ENCODE measurements at regions of chr5 and their contacts with region 1.

Region 1: DNA sequence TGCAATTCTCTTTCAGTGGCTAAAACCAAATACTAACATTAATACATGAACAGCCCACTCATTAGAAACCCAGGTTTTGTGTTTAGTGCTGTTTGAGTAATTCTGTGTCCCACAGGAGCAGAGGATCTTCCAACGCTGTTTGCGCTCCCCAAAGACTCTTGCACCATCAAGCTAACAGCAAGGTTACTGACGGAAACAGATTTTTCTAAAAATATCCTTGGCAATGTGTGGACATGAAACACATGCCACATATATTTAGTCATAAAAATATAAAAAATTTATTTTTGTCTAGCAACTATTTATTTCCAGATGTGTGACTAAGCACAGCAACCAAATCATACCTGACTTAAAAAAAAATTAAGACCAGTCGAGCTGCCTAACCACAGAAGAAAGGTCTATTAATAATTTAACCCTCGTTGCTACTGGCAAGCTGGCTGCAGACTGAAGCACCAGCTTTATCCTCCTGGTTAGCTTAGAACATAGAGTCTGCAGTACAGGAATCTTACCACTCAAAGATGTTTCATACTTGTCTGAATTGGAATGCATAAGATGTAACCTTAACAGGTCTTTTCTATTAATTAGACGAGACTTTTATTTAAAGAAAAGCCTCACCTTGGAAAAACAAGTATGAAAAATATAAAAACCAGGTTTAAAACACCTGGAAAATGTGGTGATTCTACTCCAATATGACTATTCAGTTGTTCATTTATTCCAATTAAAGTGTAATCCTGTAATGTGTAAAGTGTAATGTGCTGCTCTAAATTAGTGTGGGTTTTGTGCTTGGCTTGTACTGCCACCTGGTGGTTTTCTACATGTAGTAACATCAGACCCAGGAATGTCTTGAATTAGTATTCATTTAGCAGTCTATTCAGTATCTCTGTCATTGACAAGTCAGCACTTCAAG is 272.5 kb downstream of the EPB41L4A start:
- DNase-seq: peak; percentile 38 to 62
- ATAC-seq: peak; percentile 89 to 90
- H3K4me3 ChIP-seq: no peak overlapping the region
- H3K27ac ChIP-seq: peak overlapping the region; percentile 45 to 80 (median 74)
- H3K4me1 ChIP-seq: peaks cover 17 to 20% of the 10 kb centered on the region in 2 donors
- H3K27me3 ChIP-seq: no peaks in the 10 kb centered on the region
- CTCF ChIP-seq: peak; percentile 82 to 90 (median 87)
- POLR2A ChIP-seq: no peak

Region 2: GRCh38 chr5:111158105-111158744 is 988.4 kb before region 1 on chr5:
- in situ Hi-C with region 1: loop called (anchors 25 kb)
- intact Hi-C with region 1: no loop called
- DNase-seq: peak; percentile 5 to 16
- ATAC-seq: no peak
- H3K4me3 ChIP-seq: no peak overlapping the region
- H3K27ac ChIP-seq: no peak overlapping the region
- H3K4me1 ChIP-seq: no peaks in the 10 kb centered on the region
- H3K27me3 ChIP-seq: no peaks in the 10 kb centered on the region
- CTCF ChIP-seq: peak; percentile 72 to 93 (median 78)
- POLR2A ChIP-seq: no peak

Region 3: DNA sequence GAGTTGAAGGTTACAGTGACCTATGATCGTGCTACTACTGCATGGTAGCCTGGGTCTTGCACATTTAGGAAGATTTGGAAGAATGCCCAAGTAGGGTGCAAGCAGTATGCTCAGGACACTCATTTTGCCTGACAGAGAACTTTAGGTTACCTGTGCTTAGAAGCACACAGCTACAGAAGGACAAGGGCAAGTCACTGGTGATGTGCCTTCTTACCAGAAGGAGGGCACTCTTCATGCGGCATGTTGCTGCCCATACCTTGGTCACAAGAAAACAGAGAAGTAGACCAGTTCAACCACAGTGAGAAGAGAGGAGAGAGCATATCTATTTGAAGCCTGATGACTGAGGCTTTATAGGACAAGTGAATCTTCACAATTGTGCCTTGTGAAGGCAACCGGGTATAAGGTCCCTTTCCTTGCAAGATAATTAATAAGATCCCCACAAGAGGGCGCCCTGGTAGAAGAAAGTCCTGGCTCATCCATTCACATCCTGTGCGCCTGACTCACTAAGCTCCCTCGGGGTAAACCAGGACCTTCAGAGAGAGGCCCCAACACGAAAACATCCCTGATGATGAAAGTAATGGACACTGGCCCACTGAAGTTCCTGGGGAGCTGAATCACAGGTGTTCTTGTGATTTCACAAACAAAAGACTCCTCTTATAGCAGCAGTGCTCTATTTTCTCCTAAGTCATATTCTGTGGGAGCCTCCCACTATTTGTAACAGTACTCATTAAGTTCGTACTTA is 596.1 kb before region 1 on chr5:
- in situ Hi-C with region 1: loop called (anchors 5 to 10 kb)
- intact Hi-C with region 1: loop called (anchors 1 kb)
- DNase-seq: peak; percentile 77 to 84
- ATAC-seq: peak; percentile 99
- H3K4me3 ChIP-seq: peak overlapping the region in 1 of 4 donors; percentile 3
- H3K27ac ChIP-seq: peak overlapping the region; percentile 56 to 73 (median 66)
- H3K4me1 ChIP-seq: peaks cover 4 to 5% of the 10 kb centered on the region in 2 donors
- H3K27me3 ChIP-seq: no peaks in the 10 kb centered on the region
- CTCF ChIP-seq: peak; percentile 59 to 80 (median 74)
- POLR2A ChIP-seq: no peak

Region 4: DNA sequence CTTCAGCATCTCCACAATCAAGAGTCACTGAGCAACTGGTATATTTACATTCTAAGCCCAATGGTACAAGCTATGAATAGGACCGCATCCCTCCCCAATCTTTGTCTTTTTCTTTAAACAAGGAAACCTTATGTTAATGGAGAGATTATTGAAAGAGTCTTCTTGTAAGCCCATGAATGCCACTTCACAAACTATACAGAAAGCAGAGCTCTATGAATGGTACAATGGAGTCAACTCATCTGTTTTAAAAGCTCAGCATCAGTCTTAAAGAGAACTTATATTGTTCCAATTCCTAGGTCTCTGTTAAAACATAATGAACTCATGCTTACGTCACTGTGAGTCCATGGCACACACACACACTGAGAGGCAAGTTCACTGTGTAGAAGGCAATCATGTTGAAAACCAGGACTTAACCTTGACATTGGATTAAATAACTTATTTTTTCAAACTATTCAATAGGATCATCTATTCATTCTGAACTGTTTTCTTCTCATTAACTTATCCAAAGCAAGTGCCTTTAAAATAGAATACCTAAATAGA is 394.1 kb before region 1 on chr5:
- in situ Hi-C with region 1: loop called in 3 of 4 experiments (anchors 5 to 10 kb)
- intact Hi-C with region 1: loop called (anchors 2 kb)
- DNase-seq: no peak
- ATAC-seq: no peak
- H3K4me3 ChIP-seq: no peak overlapping the region
- H3K27ac ChIP-seq: no peak overlapping the region
- H3K4me1 ChIP-seq: peaks cover 73 to 83% of the 10 kb centered on the region in 2 donors
- H3K27me3 ChIP-seq: no peaks in the 10 kb centered on the region
- CTCF ChIP-seq: no peak
- POLR2A ChIP-seq: no peak

Region 5: DNA sequence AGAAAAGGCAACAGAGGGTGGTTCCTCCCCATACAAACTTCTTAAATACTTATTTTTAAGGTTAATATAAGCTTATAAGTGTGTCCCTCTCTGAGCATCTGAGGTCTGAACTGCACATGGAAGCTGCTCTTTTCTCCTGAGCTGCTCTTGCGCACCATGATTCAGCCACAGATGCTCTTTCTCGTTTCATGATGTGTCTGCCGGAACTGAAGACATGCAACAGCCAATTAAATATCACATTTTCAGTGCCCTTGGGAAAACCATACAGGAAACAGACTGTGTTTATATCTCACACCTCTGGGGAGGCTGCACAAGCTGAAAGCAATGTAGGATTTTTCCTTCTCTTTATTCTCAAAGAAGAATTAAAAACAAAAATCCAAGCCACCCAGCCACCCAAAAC is 292.8 kb before region 1 on chr5:
- in situ Hi-C with region 1: loop called in 1 of 4 experiments (anchors 25 kb)
- intact Hi-C with region 1: no loop called
- DNase-seq: no peak
- ATAC-seq: no peak
- H3K4me3 ChIP-seq: no peak overlapping the region
- H3K27ac ChIP-seq: no peak overlapping the region
- H3K4me1 ChIP-seq: no peaks in the 10 kb centered on the region
- H3K27me3 ChIP-seq: no peaks in the 10 kb centered on the region
- CTCF ChIP-seq: no peak
- POLR2A ChIP-seq: no peak

Region 6: GRCh38 chr5:111968459-111968858 is 178.1 kb before region 1 on chr5:
- in situ Hi-C with region 1: no loop called
- intact Hi-C with region 1: no loop called
- DNase-seq: no peak
- ATAC-seq: peak in 1 of 2 donors; percentile 60
- H3K4me3 ChIP-seq: no peak overlapping the region
- H3K27ac ChIP-seq: no peak overlapping the region
- H3K4me1 ChIP-seq: no peaks in the 10 kb centered on the region
- H3K27me3 ChIP-seq: no peaks in the 10 kb centered on the region
- CTCF ChIP-seq: no peak
- POLR2A ChIP-seq: no peak

Region 7: DNA sequence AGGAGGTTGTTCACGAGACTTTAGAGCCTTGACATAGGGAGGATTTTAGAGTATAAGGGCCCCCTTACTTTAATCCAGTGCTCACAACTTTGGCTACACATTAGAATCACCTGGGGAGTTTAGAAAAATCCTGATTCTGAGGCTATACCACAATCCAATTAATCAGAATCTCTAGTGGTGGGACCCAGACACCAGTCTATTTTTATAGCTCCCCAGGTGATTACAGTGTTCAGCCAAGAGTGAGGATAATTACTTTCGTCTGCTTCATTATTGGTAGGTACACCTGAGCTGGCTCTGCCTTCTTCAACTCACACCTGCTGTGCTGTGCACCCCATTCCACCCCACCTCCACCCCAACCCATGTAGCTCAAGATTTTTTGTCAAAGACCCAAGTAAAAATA is 413.8 kb after region 1 on chr5:
- in situ Hi-C with region 1: no loop called
- intact Hi-C with region 1: no loop called
- DNase-seq: no peak
- ATAC-seq: no peak
- H3K4me3 ChIP-seq: no peak overlapping the region
- H3K27ac ChIP-seq: no peak overlapping the region
- H3K4me1 ChIP-seq: no peaks in the 10 kb centered on the region
- H3K27me3 ChIP-seq: no peaks in the 10 kb centered on the region
- CTCF ChIP-seq: no peak
- POLR2A ChIP-seq: no peak